IMR-90 (cell line): ENCODE measurements at regions of chr5 and their contacts with region 1.

Region 1: GRCh38 chr5:150486402-150487198 is 21.3 kb upstream of the NDST1 start:
- DNase-seq: peak; percentile 48
- ATAC-seq: peak; percentile 9
- H3K4me3 ChIP-seq: peak overlapping the region; percentile 99
- H3K27ac ChIP-seq: peak overlapping the region; percentile 100
- H3K4me1 ChIP-seq: peaks cover 40% of the 10 kb centered on the region
- H3K27me3 ChIP-seq: no peaks in the 10 kb centered on the region
- CTCF ChIP-seq: peak; percentile 12; the same call in 1 of the 2 replicates
- POLR2A ChIP-seq: no peak
- RAD21 ChIP-seq: peak; percentile 28; the same call in 1 of the 2 replicates

Region 2: GRCh38 chr5:150517272-150518152 is 30.9 kb after region 1 on chr5:
- CTCF ChIA-PET with region 1: interaction called, 3 read pairs
- POLR2A ChIA-PET with region 1: no interaction called
- dilution Hi-C with region 1: no loop called
- in situ Hi-C with region 1: no loop called
- intact Hi-C with region 1: loop called (anchors 1 kb)
- DNase-seq: peak; percentile 98
- ATAC-seq: peak; percentile 85
- H3K4me3 ChIP-seq: no peak overlapping the region
- H3K27ac ChIP-seq: peak overlapping the region; percentile 36
- H3K4me1 ChIP-seq: peaks cover 31% of the 10 kb centered on the region
- H3K27me3 ChIP-seq: no peaks in the 10 kb centered on the region
- CTCF ChIP-seq: no peak
- POLR2A ChIP-seq: no peak
- RAD21 ChIP-seq: peak; percentile 4; the same call in 1 of the 2 replicates

Region 3: GRCh38 chr5:150523472-150524350 is 37.1 kb after region 1 on chr5:
- CTCF ChIA-PET with region 1: interaction called, 3 read pairs
- POLR2A ChIA-PET with region 1: no interaction called
- dilution Hi-C with region 1: no loop called
- in situ Hi-C with region 1: no loop called
- intact Hi-C with region 1: loop called (anchors 1 kb)
- DNase-seq: peak; percentile 81
- ATAC-seq: peak; percentile 80
- H3K4me3 ChIP-seq: no peak overlapping the region
- H3K27ac ChIP-seq: no peak overlapping the region
- H3K4me1 ChIP-seq: peaks cover 33% of the 10 kb centered on the region
- H3K27me3 ChIP-seq: no peaks in the 10 kb centered on the region
- CTCF ChIP-seq: peak; percentile 65
- POLR2A ChIP-seq: no peak
- RAD21 ChIP-seq: peak; percentile 77

Region 4: DNA sequence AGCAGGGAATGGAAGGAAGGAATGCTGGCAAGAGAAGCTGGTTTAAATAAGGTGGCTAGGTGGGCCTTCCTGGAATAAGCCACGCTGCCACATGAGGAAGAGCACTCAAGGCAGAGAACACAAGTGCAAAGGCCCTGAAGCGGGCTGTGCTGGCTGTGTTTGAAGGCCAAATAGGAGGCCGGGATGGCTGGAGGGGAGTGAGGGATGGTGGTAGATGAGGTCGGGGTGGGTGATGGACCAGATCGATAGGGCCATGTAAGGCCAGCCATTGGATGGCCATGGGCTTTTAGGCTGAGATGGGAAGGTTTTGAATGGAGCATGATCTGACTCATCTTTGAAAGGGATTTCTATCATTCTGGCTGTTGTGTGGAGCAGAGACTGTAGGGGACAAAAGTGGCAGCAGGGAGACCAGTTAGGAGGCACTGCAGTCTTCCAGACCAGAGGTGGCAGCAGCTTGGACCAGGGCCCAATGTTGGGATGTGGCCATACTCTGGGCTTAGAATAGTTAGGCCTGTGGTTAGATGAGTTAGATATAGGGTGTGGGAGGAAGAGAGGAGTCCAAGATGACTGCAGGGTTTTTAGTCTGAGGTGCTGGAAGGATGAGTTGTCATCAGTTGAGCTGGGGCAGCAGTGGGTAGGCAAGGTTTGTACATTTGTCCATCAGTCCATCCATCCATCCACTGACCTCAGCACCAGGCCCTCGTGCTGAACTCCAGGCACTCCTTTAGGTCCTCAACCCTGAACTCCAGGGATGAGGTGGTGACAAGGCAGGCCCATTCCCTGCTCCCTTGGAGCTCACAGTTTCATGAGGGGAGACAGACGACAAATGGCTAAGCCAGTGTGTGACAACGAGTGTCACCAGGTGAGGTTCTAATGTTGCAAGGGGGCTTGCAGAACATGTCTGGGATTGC is 51.7 kb after region 1 on chr5:
- CTCF ChIA-PET with region 1: no interaction called
- POLR2A ChIA-PET with region 1: no interaction called
- dilution Hi-C with region 1: no loop called
- in situ Hi-C with region 1: no loop called
- intact Hi-C with region 1: no loop called
- DNase-seq: peak; percentile 65
- ATAC-seq: peak; percentile 31
- H3K4me3 ChIP-seq: no peak overlapping the region
- H3K27ac ChIP-seq: 0 out of 2 replicates have a peak overlapping the region, but pooled peaks have one; percentile 0
- H3K4me1 ChIP-seq: peaks cover 30% of the 10 kb centered on the region
- H3K27me3 ChIP-seq: no peaks in the 10 kb centered on the region
- CTCF ChIP-seq: 0 out of 2 replicates have a peak, but pooled peaks have one; percentile 19
- POLR2A ChIP-seq: no peak
- RAD21 ChIP-seq: no peak

Region 5: GRCh38 chr5:150582241-150583109 is 95.9 kb after region 1 on chr5:
- CTCF ChIA-PET with region 1: no interaction called
- POLR2A ChIA-PET with region 1: interaction called, 10 read pairs
- dilution Hi-C with region 1: no loop called
- in situ Hi-C with region 1: no loop called
- intact Hi-C with region 1: no loop called
- DNase-seq: peak; percentile 69
- ATAC-seq: peak; percentile 69
- H3K4me3 ChIP-seq: no peak overlapping the region
- H3K27ac ChIP-seq: no peak overlapping the region
- H3K4me1 ChIP-seq: peaks cover 8% of the 10 kb centered on the region
- H3K27me3 ChIP-seq: peaks cover 18% of the 10 kb centered on the region
- CTCF ChIP-seq: no peak
- POLR2A ChIP-seq: no peak
- RAD21 ChIP-seq: no peak

Region 6: DNA sequence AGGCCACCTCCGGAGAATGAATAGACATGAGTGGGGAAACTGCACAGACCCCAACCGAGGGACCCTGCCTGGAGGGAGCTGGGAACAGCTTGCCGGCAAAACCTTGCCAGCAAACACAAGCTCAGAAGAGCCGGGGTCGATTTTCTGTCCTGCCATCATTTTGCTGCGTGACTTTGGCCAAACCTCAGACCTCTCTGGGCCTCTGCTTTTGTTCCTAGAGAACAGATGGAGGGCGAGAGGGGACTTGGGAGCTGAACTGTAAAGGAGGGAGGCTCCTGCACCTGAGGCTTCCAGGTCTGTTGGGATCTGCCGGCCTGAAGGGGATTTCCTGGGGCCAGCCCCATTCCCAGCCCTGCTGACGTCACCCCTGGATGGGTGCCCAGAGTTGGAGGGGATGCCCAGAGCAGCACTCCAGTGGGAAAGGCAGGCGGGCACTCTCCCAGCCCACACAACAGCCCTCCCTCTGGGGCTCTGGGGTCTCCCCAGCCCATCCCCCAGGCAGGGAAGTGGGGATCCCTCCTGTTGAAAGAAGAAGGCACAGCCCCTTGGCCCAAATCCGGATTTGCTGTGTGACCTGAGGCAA is 113.4 kb after region 1 on chr5:
- CTCF ChIA-PET with region 1: no interaction called
- POLR2A ChIA-PET with region 1: no interaction called
- dilution Hi-C with region 1: no loop called
- in situ Hi-C with region 1: no loop called
- intact Hi-C with region 1: no loop called
- DNase-seq: peak; percentile 86
- ATAC-seq: peak; percentile 78
- H3K4me3 ChIP-seq: no peak overlapping the region
- H3K27ac ChIP-seq: no peak overlapping the region
- H3K4me1 ChIP-seq: peaks cover 7% of the 10 kb centered on the region
- H3K27me3 ChIP-seq: no peaks in the 10 kb centered on the region; the same call in 1 of the 2 replicates
- CTCF ChIP-seq: no peak
- POLR2A ChIP-seq: no peak
- RAD21 ChIP-seq: no peak

Region 7: GRCh38 chr5:150904479-150905318 is 418.1 kb after region 1 on chr5 and contains the start of gene ZNF300:
- CTCF ChIA-PET with region 1: no interaction called
- POLR2A ChIA-PET with region 1: no interaction called
- dilution Hi-C with region 1: no loop called
- in situ Hi-C with region 1: no loop called
- intact Hi-C with region 1: no loop called
- DNase-seq: peak; percentile 93
- ATAC-seq: peak; percentile 100
- H3K4me3 ChIP-seq: peak within 1 kb of the TSS; percentile 81
- H3K27ac ChIP-seq: peak within 1 kb of the TSS; percentile 93
- H3K4me1 ChIP-seq: no peaks in the 10 kb centered on the region
- H3K27me3 ChIP-seq: no peaks in the 10 kb centered on the region
- CTCF ChIP-seq: no peak
- POLR2A ChIP-seq: peak; percentile 78; the same call in 1 of the 2 replicates
- RAD21 ChIP-seq: no peak
- total RNA-seq, gene ZNF300: 6.1 and 7.5 TPM in 2 replicates